ENCODE measurements at regions of chr2 and their contacts with region 1.

Region 1: GRCh38 chr2:239223310-239224198 is 177.3 kb downstream of the HDAC4 start:
- DNase-seq: peak; percentile 53
- ATAC-seq: no peak
- H3K4me3 ChIP-seq: no peak overlapping the region
- H3K27ac ChIP-seq: peak overlapping the region; percentile 24; the same call in 1 of the 2 replicates
- H3K4me1 ChIP-seq: peaks cover 54% of the 10 kb centered on the region
- H3K27me3 ChIP-seq: no peaks in the 10 kb centered on the region
- CTCF ChIP-seq: no peak
- POLR2A ChIP-seq: no peak
- RAD21 ChIP-seq: no peak

Region 2: DNA sequence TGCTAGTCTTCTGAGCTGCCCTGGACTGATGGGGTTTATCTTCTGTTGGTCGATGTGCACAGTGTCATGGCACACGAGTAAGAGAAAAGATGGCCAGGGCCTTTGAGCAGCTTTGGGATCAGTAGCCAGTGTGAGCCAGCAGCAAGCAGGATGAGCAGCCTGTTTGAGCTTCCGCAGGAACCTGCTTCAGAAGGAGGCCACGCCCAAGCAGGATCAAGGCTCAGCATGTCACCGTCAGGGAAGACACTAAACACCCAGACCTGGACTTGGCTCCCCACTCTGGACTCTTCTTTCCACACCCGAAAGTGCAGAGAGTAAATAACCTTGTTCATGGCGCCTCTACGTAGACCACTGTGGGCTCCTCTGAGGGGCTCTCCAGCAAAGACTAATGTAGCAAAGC is 822.0 kb before region 1 on chr2:
- CTCF ChIA-PET with region 1: no interaction called
- POLR2A ChIA-PET with region 1: no interaction called
- dilution Hi-C with region 1: no loop called
- in situ Hi-C with region 1: no loop called
- intact Hi-C with region 1: no loop called
- DNase-seq: no peak
- ATAC-seq: no peak
- H3K4me3 ChIP-seq: no peak overlapping the region
- H3K27ac ChIP-seq: no peak overlapping the region
- H3K4me1 ChIP-seq: no peaks in the 10 kb centered on the region
- H3K27me3 ChIP-seq: no peaks in the 10 kb centered on the region
- CTCF ChIP-seq: no peak
- POLR2A ChIP-seq: no peak
- RAD21 ChIP-seq: no peak

Region 3: GRCh38 chr2:239275044-239275685 is 51.6 kb after region 1 on chr2:
- CTCF ChIA-PET with region 1: no interaction called
- POLR2A ChIA-PET with region 1: no interaction called
- dilution Hi-C with region 1: no loop called
- in situ Hi-C with region 1: no loop called
- intact Hi-C with region 1: loop called (anchors 2 kb)
- DNase-seq: peak; percentile 98
- ATAC-seq: peak; percentile 66
- H3K4me3 ChIP-seq: no peak overlapping the region
- H3K27ac ChIP-seq: peak overlapping the region; percentile 81
- H3K4me1 ChIP-seq: peaks cover 53% of the 10 kb centered on the region
- H3K27me3 ChIP-seq: no peaks in the 10 kb centered on the region
- CTCF ChIP-seq: peak; percentile 14; the same call in 1 of the 2 replicates
- POLR2A ChIP-seq: peak; percentile 6; the same call in 1 of the 2 replicates
- RAD21 ChIP-seq: peak; percentile 27

Region 4: GRCh38 chr2:239288951-239289511 is 65.5 kb after region 1 on chr2:
- CTCF ChIA-PET with region 1: no interaction called
- POLR2A ChIA-PET with region 1: no interaction called
- dilution Hi-C with region 1: no loop called
- in situ Hi-C with region 1: no loop called
- intact Hi-C with region 1: loop called (anchors 5 kb)
- DNase-seq: no peak
- ATAC-seq: peak; percentile 29; the same call in 1 of the 2 replicates
- H3K4me3 ChIP-seq: no peak overlapping the region
- H3K27ac ChIP-seq: peak overlapping the region; percentile 65
- H3K4me1 ChIP-seq: peaks cover 57% of the 10 kb centered on the region
- H3K27me3 ChIP-seq: no peaks in the 10 kb centered on the region
- CTCF ChIP-seq: no peak
- POLR2A ChIP-seq: no peak
- RAD21 ChIP-seq: no peak